ENCODE measurements at regions of chr9 and their contacts with region 1.

Region 1: GRCh38 chr9:97411789-97412625 is at the start of gene TDRD7:
- DNase-seq: peak; percentile 81 to 98 (median 92)
- ATAC-seq: peak; percentile 88
- H3K4me3 ChIP-seq: peak within 1 kb of the TSS; percentile 79
- H3K4me3 Mint-ChIP-seq: peak within 1 kb of the TSS; percentile 90
- H3K27ac ChIP-seq: peak within 1 kb of the TSS; percentile 41 to 52
- H3K27ac Mint-ChIP-seq: peak within 1 kb of the TSS; percentile 82
- H3K4me1 ChIP-seq: peaks cover 12% of the 10 kb centered on the region
- H3K4me1 Mint-ChIP-seq: peaks cover 40% of the 10 kb centered on the region
- H3K27me3 ChIP-seq: peaks cover 0 to 5% of the 10 kb centered on the region in 2 experiments
- H3K27me3 Mint-ChIP-seq: peaks cover 20% of the 10 kb centered on the region
- CTCF ChIP-seq: peak; percentile 97
- total RNA-seq, gene TDRD7: 3.3 to 3.6 TPM

Region 2: DNA sequence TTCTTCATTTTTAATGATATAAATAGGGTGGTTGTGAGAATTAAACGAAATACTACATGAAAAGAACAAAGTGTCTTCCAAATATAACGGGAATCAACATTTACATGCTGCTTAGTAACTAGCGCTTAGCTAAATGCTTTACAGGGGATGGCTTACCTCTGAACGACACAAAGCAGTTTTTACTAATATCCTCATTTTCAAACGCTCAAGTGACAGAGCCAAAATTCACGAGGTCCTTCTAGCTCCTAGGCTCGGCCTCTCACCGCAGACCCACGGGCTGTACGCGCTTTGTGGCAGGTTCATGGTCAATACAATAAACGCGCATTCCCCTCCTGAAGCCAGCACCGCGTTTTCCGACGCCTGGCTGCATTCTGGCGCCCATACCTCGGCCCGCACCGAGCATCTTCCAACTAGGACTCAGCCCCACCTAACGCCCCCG is 634.6 kb before region 1 on chr9:
- CTCF ChIA-PET with region 1: interaction called, 3 read pairs
- POLR2A ChIA-PET with region 1: no interaction called
- intact Hi-C with region 1: loop called in 1 of 2 experiments (anchors 5 kb)
- DNase-seq: peak in 1 of 14 experiments; percentile 24
- ATAC-seq: peak; percentile 40
- H3K4me3 ChIP-seq: peak overlapping the region; percentile 78
- H3K4me3 Mint-ChIP-seq: peak overlapping the region; percentile 99
- H3K27ac ChIP-seq: peak overlapping the region; percentile 78 to 80
- H3K27ac Mint-ChIP-seq: peak overlapping the region; percentile 99
- H3K4me1 ChIP-seq: peaks cover 13% of the 10 kb centered on the region
- H3K4me1 Mint-ChIP-seq: peaks cover 57% of the 10 kb centered on the region
- H3K27me3 ChIP-seq: no peaks in the 10 kb centered on the region
- H3K27me3 Mint-ChIP-seq: no peaks in the 10 kb centered on the region
- CTCF ChIP-seq: no peak

Region 3: GRCh38 chr9:97237951-97238851 is 173.8 kb before region 1 on chr9:
- CTCF ChIA-PET with region 1: no interaction called
- POLR2A ChIA-PET with region 1: no interaction called
- intact Hi-C with region 1: loop called in 1 of 2 experiments (anchors 5 kb)
- DNase-seq: peak; percentile 54 to 89 (median 71)
- ATAC-seq: peak; percentile 90
- H3K4me3 ChIP-seq: peak overlapping the region; percentile 61
- H3K4me3 Mint-ChIP-seq: peak overlapping the region; percentile 96
- H3K27ac ChIP-seq: peak overlapping the region; percentile 4 to 59
- H3K27ac Mint-ChIP-seq: peak overlapping the region; percentile 91
- H3K4me1 ChIP-seq: peaks cover 13% of the 10 kb centered on the region
- H3K4me1 Mint-ChIP-seq: peaks cover 27% of the 10 kb centered on the region
- H3K27me3 ChIP-seq: no peaks in the 10 kb centered on the region
- H3K27me3 Mint-ChIP-seq: no peaks in the 10 kb centered on the region
- CTCF ChIP-seq: no peak

Region 4: DNA sequence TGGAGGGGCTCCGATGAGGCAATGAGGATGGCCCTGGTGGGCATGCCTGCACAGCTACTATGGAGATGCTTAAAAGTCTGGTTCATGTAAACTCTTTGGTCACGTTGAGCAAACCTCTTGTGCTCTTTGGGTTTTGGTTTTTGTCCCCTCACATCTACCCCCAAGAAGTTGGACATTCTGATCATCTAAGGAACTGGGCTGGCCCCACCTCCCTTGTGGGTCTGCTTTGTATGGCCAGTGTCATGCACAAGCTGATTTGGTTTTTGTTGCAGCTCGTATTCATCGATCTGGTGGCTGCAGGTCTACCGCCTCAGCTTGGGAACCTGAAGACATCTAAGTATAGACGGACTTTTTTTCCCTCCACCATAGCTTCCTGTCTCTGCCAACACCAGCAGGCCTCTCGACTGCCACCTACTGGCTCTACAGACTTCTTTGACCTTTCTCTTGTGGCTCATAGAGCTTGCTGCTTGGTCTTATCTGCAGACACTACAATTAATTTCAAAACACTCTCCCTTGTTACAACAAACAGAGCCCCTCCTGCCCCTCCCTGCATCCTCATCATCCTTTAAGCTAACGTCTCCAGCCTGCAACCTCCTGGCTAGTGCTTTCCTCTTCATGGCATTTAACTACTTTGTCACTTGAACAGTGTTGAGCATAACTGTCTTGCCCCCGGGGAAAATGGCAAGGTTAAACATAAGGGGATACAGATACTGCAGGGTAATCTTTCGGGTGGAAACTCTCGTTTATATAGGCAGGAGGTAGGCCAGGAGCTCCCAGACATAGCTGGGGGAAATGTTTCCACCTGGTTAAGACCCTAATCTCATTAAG is 186.7 kb after region 1 on chr9:
- CTCF ChIA-PET with region 1: interaction called, 9 read pairs
- POLR2A ChIA-PET with region 1: interaction called, 15 read pairs
- intact Hi-C with region 1: loop called (anchors 1 kb)
- DNase-seq: peak; percentile 46 to 85 (median 60)
- ATAC-seq: peak; percentile 96
- H3K4me3 ChIP-seq: no peak overlapping the region
- H3K4me3 Mint-ChIP-seq: peak overlapping the region; percentile 40
- H3K27ac ChIP-seq: no peak overlapping the region
- H3K27ac Mint-ChIP-seq: no peak overlapping the region
- H3K4me1 ChIP-seq: peaks cover 4% of the 10 kb centered on the region
- H3K4me1 Mint-ChIP-seq: peaks cover 7% of the 10 kb centered on the region
- H3K27me3 ChIP-seq: no peaks in the 10 kb centered on the region
- H3K27me3 Mint-ChIP-seq: no peaks in the 10 kb centered on the region
- CTCF ChIP-seq: peak; percentile 87

Region 5: DNA sequence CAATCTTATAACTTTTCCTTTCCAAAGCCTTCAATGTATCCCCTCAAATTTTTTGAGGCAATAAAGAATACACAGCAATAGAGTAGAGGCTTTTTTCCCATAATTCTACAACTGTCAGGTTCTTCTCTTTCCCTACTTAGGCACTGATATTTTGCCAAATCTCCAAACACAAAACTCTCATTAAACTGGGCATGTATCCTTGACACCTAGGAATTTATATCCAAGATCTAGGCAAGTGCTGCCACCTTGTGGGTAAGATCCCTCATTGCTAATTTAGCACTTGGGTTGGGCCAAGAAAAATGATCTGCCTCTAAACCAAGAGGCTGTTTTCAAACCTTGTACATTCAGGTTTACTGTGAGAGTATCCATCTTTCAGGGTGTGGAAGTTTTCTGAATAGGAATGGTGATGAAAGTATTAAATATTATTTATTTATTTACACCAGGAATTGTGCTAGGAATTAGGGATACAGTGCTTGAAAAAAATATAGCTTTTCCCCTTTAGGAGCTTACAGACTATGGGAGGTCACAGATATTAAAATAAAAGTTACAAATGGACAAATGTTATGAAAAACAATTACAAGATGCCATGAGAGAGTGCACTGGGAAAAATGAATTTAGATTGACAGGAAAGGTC is 203.5 kb after region 1 on chr9:
- CTCF ChIA-PET with region 1: interaction called, 3 read pairs
- POLR2A ChIA-PET with region 1: interaction called, 5 read pairs
- intact Hi-C with region 1: loop called (anchors 1 kb)
- DNase-seq: peak; percentile 15 to 76 (median 44)
- ATAC-seq: peak; percentile 65
- H3K4me3 ChIP-seq: no peak overlapping the region
- H3K4me3 Mint-ChIP-seq: no peak overlapping the region
- H3K27ac ChIP-seq: no peak overlapping the region
- H3K27ac Mint-ChIP-seq: no peak overlapping the region
- H3K4me1 ChIP-seq: no peaks in the 10 kb centered on the region
- H3K4me1 Mint-ChIP-seq: no peaks in the 10 kb centered on the region
- H3K27me3 ChIP-seq: no peaks in the 10 kb centered on the region
- H3K27me3 Mint-ChIP-seq: no peaks in the 10 kb centered on the region
- CTCF ChIP-seq: peak; percentile 83

Region 6: DNA sequence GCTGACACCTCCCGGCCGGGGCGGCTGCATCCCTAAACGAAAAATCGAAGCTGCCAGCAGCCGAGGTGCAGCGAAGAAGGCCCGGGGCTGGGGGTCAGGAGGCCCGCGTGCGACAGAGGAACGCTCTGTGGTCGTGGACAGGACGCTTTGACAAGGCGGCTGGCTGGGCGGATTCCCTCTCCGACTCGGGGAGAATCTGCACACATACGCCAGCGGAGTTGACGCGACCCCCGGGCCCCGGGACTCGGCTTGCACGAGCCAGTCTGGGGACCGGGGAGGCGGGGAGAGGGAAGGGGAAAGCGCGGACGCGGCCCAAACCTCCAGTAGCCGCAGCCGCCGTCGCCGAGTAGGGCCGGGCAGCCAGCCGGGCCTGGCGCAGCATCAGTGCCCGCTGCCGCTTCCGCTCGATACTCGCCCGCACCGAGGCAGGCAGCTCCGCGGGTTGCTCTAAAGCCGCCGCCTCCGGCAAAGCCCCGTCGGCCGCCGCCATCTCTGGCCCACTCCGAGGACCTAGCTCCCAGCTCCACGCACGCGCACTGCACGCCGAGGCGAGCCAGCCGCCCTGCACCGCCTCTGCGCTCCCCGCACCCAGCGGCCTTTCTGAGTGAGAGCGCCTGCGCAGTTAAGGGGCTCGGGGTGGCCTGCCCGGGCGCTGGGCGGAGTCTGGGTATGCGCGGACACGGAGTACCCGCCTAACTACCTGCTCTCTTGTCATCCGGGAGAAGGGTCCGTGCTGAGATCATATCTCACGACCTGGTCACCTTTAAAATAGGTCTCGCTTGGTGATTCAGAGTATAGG is 285.0 kb after region 1 on chr9 and contains the start of gene XPA:
- CTCF ChIA-PET with region 1: no interaction called
- POLR2A ChIA-PET with region 1: no interaction called
- intact Hi-C with region 1: loop called in 1 of 2 experiments (anchors 5 kb)
- DNase-seq: peak; percentile 94 to 99 (median 97)
- ATAC-seq: peak; percentile 92
- H3K4me3 ChIP-seq: peak within 1 kb of the TSS; percentile 83
- H3K4me3 Mint-ChIP-seq: peak within 1 kb of the TSS; percentile 87
- H3K27ac ChIP-seq: peak within 1 kb of the TSS; percentile 80 to 81
- H3K27ac Mint-ChIP-seq: peak within 1 kb of the TSS; percentile 86
- H3K4me1 ChIP-seq: peaks cover 26% of the 10 kb centered on the region
- H3K4me1 Mint-ChIP-seq: peaks cover 62% of the 10 kb centered on the region
- H3K27me3 ChIP-seq: no peaks in the 10 kb centered on the region
- H3K27me3 Mint-ChIP-seq: peaks cover 4% of the 10 kb centered on the region
- CTCF ChIP-seq: no peak
- total RNA-seq, gene XPA: 20.2 to 23.3 TPM

Region 7: GRCh38 chr9:97907046-97907445 is 495.0 kb after region 1 on chr9:
- CTCF ChIA-PET with region 1: no interaction called
- POLR2A ChIA-PET with region 1: no interaction called
- intact Hi-C with region 1: no loop called
- DNase-seq: peak in 7 of 14 experiments; percentile 8 to 68 (median 46)
- ATAC-seq: no peak
- H3K4me3 ChIP-seq: peak overlapping the region; percentile 44
- H3K4me3 Mint-ChIP-seq: peak overlapping the region; percentile 82
- H3K27ac ChIP-seq: peak overlapping the region; percentile 81 to 86
- H3K27ac Mint-ChIP-seq: peak overlapping the region; percentile 96
- H3K4me1 ChIP-seq: peaks cover 89% of the 10 kb centered on the region
- H3K4me1 Mint-ChIP-seq: peaks cover 94% of the 10 kb centered on the region
- H3K27me3 ChIP-seq: no peaks in the 10 kb centered on the region
- H3K27me3 Mint-ChIP-seq: no peaks in the 10 kb centered on the region
- CTCF ChIP-seq: no peak

Region 8: DNA sequence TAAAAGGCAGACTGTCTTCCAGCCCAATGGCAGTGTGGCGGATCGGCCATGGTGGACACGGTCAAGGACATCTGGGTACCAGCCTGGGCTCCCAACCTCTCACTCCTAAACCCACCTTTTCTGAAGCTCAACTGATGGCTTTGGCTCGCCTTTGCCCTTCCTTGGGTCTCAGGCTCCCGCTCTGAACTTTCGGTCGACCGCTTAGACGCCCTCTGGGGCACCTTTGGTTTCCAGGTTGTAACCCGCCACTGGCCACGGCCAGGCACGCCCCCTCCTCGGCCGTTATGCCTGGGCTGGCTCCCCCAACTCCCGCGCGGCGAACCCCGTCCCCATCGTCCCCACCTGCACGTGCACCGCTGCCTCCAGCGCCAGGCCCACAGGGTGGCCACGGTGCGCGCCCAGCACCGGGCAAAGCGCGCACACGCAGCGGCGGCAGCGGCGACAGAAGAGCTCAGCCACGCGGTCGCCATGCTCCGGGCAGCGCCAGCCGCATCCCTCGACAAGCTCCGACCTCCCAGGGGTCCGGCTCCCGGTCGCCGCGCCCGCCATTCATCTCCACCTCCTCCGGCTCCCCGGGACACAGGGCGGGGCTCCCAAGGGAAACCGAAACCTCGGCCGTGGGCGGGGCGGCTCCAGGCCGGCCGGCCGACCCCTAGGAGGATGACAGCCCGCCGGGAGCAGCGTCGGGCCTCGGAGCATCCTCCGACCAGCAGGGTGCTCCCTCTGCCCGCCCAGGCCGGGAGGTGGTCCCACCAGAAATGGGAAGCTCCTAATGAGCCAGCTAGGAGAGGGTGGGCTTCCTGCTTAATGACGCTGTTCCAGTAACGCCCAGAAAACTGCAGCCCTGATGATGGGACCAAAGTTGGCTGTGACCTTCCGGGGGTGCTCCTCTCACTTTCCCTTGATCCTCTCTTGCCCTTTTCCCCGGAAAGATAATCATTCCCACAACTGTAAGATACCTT is 706.9 kb after region 1 on chr9 and contains the start of gene TRIM14:
- CTCF ChIA-PET with region 1: no interaction called
- POLR2A ChIA-PET with region 1: no interaction called
- intact Hi-C with region 1: loop called in 1 of 2 experiments (anchors 5 kb)
- DNase-seq: peak in 12 of 14 experiments; percentile 28 to 74 (median 46)
- ATAC-seq: peak; percentile 38
- H3K4me3 ChIP-seq: peak within 1 kb of the TSS; percentile 89
- H3K4me3 Mint-ChIP-seq: peak within 1 kb of the TSS; percentile 90
- H3K27ac ChIP-seq: peak within 1 kb of the TSS; percentile 79 to 84
- H3K27ac Mint-ChIP-seq: peak within 1 kb of the TSS; percentile 95
- H3K4me1 ChIP-seq: peaks cover 66% of the 10 kb centered on the region
- H3K4me1 Mint-ChIP-seq: peaks cover 65% of the 10 kb centered on the region
- H3K27me3 ChIP-seq: no peaks in the 10 kb centered on the region
- H3K27me3 Mint-ChIP-seq: no peaks in the 10 kb centered on the region
- CTCF ChIP-seq: no peak
- total RNA-seq, gene TRIM14: 23.5 to 23.6 TPM